SK-N-SH (cell line): ENCODE measurements at regions of chr22 and their contacts with region 1.

Region 1: DNA sequence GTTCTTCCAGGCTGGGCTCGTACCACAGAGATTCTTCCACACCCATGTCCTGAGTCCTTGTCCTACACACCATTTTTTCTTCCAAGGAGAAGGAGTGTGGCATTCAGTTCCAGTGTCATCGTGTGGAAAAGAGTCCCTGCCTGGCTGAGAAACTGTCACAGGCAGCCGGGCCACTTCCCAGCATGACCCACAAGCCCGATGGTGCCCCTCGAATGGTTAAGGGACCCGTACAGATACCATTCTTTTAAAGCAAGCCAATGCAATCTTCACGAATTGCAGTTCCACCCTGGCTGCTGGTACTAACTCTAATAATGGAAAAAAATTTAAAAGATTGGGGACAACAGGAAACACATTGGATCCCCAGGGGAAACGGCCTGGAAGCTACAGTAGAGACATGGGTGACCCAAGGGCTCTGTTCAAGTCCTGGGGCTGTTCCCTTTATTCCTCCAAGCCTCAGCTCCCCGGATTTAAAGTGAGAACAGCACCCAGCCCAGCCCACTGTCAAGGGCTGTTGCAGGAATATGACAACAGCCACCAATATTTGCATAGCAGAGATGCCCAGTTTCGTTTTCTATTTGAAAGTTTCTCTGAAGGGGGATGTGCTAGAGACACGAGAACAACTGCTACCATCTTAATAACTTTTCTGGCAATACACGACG is 80.9 kb upstream of the WNT7B start:
- DNase-seq: peak; percentile 58
- H3K4me3 ChIP-seq: peak overlapping the region; percentile 67 to 68
- H3K27ac ChIP-seq: peak overlapping the region; percentile 94 to 100
- H3K4me1 ChIP-seq: peaks cover 42 to 66% of the 10 kb centered on the region in 2 experiments
- H3K27me3 ChIP-seq: no peaks in the 10 kb centered on the region
- CTCF ChIP-seq: no peak
- EP300 ChIP-seq: no peak
- RAD21 ChIP-seq: no peak

Region 2: DNA sequence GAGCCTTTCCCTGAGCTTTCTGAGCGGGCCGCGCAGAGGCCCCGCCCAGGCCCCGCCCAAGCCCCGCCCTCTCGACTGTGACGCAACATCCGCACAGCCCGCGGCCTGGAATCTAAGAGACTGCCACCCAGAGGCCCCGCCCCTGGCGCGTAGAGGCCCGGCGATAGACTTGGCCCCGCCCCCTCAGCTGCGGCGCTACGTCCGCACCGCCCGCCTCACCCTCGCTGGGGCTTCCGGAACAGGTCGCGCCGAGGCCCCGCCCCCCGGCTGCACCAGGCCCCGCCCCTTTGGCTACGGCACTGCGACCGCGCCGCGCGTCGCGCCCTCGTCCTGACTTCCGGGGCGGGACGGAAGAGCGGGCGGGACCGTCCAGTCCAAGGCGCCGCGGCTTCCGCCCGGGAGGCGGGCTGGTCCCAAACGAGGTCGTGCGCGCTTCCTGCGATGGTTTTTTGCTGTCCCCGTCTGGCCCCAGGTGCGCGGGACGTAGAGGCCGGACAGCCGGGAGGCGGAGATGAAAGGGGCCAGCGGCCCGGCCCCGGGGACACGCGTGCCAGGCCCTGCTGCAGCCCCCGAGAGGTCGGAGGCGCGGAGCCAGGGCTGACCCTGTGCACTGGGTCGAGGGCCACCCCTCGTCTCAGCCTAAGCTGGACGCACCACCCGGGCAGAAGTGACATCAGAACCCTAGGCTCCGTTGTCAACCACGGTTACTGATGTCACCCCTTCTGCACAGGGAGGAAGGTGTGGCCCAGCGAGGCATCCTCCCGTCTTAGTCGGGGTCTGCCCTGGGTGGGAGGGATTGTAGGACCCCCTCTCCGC is 21.9 kb before region 1 on chr22:
- CTCF ChIA-PET with region 1: interaction called, 54 read pairs
- POLR2A ChIA-PET with region 1: interaction called, 23 read pairs
- DNase-seq: peak; percentile 100
- H3K4me3 ChIP-seq: peak overlapping the region; percentile 88 to 91
- H3K27ac ChIP-seq: peak overlapping the region; percentile 89 to 95
- H3K4me1 ChIP-seq: peaks cover 0 to 35% of the 10 kb centered on the region in 2 experiments; a peak in 3 of 4 replicates
- H3K27me3 ChIP-seq: no peaks in the 10 kb centered on the region
- CTCF ChIP-seq: no peak
- EP300 ChIP-seq: no peak
- RAD21 ChIP-seq: no peak

Region 3: DNA sequence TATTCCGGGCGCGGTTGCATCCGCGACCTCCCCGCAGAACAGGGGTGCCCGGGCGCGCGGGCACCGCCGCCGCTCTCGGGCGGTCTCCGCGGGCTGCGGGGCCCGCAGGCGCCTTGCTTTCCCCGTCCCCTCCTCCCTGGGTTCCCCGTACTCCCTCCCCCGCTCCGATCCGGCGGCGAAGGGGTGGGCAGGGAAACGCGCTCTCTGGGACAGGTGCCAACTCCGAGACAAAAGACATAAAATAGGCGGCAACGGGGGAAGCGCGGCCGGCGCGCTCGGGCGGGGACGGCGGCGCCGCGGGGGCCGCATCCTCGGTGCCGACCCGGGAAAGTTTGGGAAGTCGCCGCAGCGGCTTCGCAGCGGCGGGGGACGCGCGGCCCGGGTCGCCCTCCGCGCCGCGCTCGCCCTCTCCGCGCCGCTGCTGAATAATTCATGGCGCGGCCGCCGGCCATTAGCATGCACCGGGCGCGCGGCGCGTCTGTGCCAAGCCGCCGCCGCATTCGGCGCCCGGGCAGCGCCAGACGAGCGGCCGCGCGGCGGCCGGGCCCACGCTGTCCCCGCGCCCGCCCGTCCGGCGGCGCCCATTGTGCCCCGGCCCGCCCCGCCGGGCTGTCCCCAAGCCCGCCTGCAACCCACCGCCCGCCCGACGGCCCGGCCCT is 13.7 kb after region 1 on chr22:
- CTCF ChIA-PET with region 1: interaction called, 22 read pairs
- POLR2A ChIA-PET with region 1: interaction called, 63 read pairs
- DNase-seq: peak; percentile 88
- H3K4me3 ChIP-seq: peak overlapping the region; percentile 90 to 92
- H3K27ac ChIP-seq: peak overlapping the region; percentile 96 to 100
- H3K4me1 ChIP-seq: peaks cover 6 to 33% of the 10 kb centered on the region in 2 experiments; a peak in 3 of 4 replicates
- H3K27me3 ChIP-seq: no peaks in the 10 kb centered on the region
- CTCF ChIP-seq: no peak
- EP300 ChIP-seq: peak; percentile 15 to 57; a peak in 1 of 4 replicates
- RAD21 ChIP-seq: no peak; the same call in 1 of the 2 replicates

Region 4: DNA sequence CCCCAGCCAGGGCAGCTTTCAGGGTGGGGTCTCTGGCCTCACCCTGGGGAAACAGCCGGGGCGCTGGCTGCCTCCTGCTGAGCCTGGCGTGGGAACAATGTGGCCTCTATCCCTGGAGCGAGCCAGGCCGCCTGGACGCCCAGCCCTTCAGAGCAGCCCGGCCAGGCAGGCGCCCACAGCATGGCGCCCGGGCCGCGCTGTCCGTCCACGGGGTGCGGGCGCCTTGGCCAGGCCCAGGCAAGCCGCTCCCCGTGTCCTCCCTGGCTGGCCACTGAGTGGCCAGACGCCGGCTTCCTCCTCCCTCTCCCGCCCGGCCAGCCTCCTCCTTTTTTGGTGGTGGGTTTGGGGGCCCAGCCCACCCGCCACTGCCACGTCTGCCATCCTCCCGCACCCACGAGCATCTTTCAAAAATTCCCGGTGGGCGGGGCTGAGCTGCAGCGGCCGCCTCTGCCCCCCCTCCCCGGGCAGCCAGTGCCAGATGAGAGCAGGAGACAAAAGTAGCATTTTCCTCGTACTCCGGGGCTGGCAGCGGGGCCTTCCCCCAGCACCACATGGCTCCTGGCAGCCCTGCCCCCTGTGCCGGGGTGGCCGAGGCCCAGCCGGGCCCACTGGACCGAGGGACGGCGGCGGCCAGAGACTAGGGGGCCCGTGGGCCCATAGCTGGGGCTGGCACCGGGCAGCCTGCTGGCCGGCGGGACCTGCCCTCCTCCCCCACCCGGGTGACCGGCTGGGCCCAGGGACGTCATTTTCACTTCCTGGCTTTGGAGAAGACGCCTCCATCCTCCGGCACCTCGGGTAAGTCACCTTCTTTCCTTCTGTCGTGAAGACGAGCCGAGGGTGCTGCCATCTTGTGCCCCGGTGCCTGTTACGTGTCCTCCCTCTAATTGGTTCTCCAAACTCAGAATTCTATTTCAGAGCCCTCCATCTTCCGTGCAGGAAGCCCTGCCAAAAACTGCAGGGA is 22.2 kb after region 1 on chr22:
- CTCF ChIA-PET with region 1: interaction called, 22 read pairs
- POLR2A ChIA-PET with region 1: interaction called, 63 read pairs
- DNase-seq: peak; percentile 85
- H3K4me3 ChIP-seq: peak overlapping the region; percentile 90 to 92
- H3K27ac ChIP-seq: peak overlapping the region; percentile 96 to 100
- H3K4me1 ChIP-seq: peaks cover 11 to 66% of the 10 kb centered on the region in 2 experiments; a peak in 3 of 4 replicates
- H3K27me3 ChIP-seq: no peaks in the 10 kb centered on the region
- CTCF ChIP-seq: no peak
- EP300 ChIP-seq: peak in 1 of 2 experiments; percentile 31; a peak in 2 of 4 replicates
- RAD21 ChIP-seq: no peak